ENCODE measurements at regions of chr6 and their contacts with region 1.

Region 1: GRCh38 chr6:105882121-105882803 is 203.9 kb upstream of the PRDM1 start:
- DNase-seq: no peak
- ATAC-seq: no peak
- H3K4me3 ChIP-seq: no peak overlapping the region
- H3K27ac ChIP-seq: no peak overlapping the region
- H3K4me1 ChIP-seq: peaks cover 4% of the 10 kb centered on the region
- H3K27me3 ChIP-seq: no peaks in the 10 kb centered on the region
- CTCF ChIP-seq: no peak
- EP300 ChIP-seq: no peak
- POLR2A ChIP-seq: no peak
- RAD21 ChIP-seq: no peak

Region 2: DNA sequence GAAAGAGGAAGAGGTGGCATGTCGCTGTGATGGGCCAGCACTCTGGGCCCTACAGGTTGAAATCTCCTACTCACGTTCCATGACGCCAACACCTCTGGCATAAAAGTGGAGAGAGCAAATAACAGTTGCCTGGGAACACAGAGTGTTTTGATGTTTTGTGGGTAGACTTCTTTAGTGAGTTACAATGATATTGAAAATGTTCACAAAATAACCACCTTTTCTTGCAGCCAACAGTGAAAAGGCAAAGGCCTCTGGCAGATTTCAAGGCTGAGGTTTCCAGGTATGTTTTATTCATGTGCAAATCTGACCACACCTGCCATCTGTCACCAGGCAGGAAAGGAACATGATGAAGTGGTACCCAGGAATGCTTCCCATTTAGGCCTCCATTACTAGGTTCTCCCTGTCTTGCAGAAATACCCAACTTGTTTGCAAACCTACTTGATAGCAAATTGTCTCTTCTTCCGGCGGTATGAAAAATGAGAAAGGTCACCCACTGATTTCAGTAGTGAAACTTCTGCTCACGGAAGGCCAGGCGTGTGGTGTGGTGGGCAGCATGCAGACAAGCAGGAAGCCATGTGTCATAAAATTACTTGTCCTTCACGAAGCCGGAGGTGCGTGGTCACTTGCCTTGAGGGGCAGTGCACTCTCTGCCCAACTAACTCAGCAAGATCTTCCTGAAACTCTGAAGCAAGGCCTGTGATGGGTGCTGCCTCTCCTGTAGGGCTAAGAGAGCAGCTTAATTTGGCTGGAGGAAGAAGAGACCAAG is 95.2 kb before region 1 on chr6:
- CTCF ChIA-PET with region 1: no interaction called
- POLR2A ChIA-PET with region 1: no interaction called
- RAD21 ChIA-PET with region 1: no interaction called
- SMC1A ChIA-PET with region 1: no interaction called
- in situ Hi-C with region 1: no loop called
- intact Hi-C with region 1: no loop called
- DNase-seq: peak; percentile 74
- ATAC-seq: peak; percentile 77
- H3K4me3 ChIP-seq: no peak overlapping the region
- H3K27ac ChIP-seq: no peak overlapping the region
- H3K4me1 ChIP-seq: peaks cover 33% of the 10 kb centered on the region
- H3K27me3 ChIP-seq: no peaks in the 10 kb centered on the region
- CTCF ChIP-seq: no peak
- EP300 ChIP-seq: 0 out of 4 replicates have a peak, but pooled peaks of 1 of the 2 experiments have one; percentile 30
- POLR2A ChIP-seq: no peak
- RAD21 ChIP-seq: no peak

Region 3: GRCh38 chr6:105892577-105893262 is 10.5 kb after region 1 on chr6:
- CTCF ChIA-PET with region 1: interaction called, 8 read pairs
- POLR2A ChIA-PET with region 1: interaction called, 5 read pairs
- RAD21 ChIA-PET with region 1: interaction called, 6 read pairs
- SMC1A ChIA-PET with region 1: interaction called, 18 read pairs
- in situ Hi-C with region 1: no loop called
- intact Hi-C with region 1: no loop called
- DNase-seq: peak; percentile 74
- ATAC-seq: peak; percentile 97
- H3K4me3 ChIP-seq: no peak overlapping the region
- H3K27ac ChIP-seq: no peak overlapping the region; the same call in 1 of the 2 replicates
- H3K4me1 ChIP-seq: peaks cover 12% of the 10 kb centered on the region
- H3K27me3 ChIP-seq: no peaks in the 10 kb centered on the region; a peak in 1 of 4 replicates
- CTCF ChIP-seq: no peak
- EP300 ChIP-seq: peak; percentile 66 to 85; a peak in 3 of 4 replicates
- POLR2A ChIP-seq: no peak
- RAD21 ChIP-seq: no peak

Region 4: GRCh38 chr6:105898286-105898685 is 16.0 kb after region 1 on chr6:
- CTCF ChIA-PET with region 1: interaction called, 3 read pairs
- POLR2A ChIA-PET with region 1: interaction called, 10 read pairs
- RAD21 ChIA-PET with region 1: interaction called, 6 read pairs
- SMC1A ChIA-PET with region 1: interaction called, 18 read pairs
- in situ Hi-C with region 1: no loop called
- intact Hi-C with region 1: no loop called
- DNase-seq: no peak
- ATAC-seq: peak; percentile 74
- H3K4me3 ChIP-seq: no peak overlapping the region
- H3K27ac ChIP-seq: no peak overlapping the region
- H3K4me1 ChIP-seq: peaks cover 4% of the 10 kb centered on the region; the same call in 1 of the 2 replicates
- H3K27me3 ChIP-seq: no peaks in the 10 kb centered on the region; a peak in 1 of 4 replicates
- CTCF ChIP-seq: no peak
- EP300 ChIP-seq: no peak
- POLR2A ChIP-seq: no peak
- RAD21 ChIP-seq: no peak

Region 5: DNA sequence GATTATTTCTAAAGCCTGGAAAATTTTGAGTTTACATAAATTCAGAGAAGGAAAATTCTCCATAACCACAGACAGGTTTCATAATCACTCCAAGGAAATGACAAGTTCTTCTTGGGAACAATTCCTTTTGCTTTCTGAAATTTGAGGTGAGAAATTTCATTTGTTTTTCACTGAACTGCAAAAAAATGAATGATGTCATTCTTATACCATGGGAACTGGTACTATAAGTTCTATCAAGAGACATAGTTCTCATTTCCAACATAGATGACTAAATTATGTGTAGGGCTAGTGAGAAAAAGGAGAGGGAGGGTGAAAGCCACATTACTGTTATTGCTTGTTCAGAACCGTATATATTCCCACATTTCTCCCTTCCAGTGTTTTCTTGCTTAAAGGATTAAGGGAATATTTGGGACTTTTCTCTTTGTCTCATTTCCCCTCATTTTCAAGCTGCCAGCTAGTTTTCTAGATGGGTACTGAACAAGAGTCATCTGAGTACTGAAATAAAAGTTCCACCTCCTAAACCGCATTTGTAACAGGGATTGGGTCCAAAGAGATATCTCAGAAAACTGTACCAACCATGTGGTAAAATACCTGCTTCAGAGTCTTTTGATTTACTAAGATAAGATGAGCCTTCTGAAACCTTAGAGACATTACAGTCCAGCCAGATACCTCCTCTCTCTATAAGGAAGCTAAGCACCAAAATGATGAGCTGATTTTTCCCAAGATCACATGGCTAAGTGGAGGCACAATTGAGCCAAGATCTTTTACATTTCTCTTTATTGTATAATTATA is 59.6 kb after region 1 on chr6:
- CTCF ChIA-PET with region 1: no interaction called
- POLR2A ChIA-PET with region 1: no interaction called
- RAD21 ChIA-PET with region 1: no interaction called
- SMC1A ChIA-PET with region 1: no interaction called
- in situ Hi-C with region 1: no loop called
- intact Hi-C with region 1: no loop called
- DNase-seq: no peak
- ATAC-seq: no peak
- H3K4me3 ChIP-seq: no peak overlapping the region
- H3K27ac ChIP-seq: no peak overlapping the region
- H3K4me1 ChIP-seq: no peaks in the 10 kb centered on the region
- H3K27me3 ChIP-seq: peaks cover 0 to 1% of the 10 kb centered on the region in 2 experiments; a peak in 2 of 4 replicates
- CTCF ChIP-seq: no peak
- EP300 ChIP-seq: no peak
- POLR2A ChIP-seq: no peak
- RAD21 ChIP-seq: no peak